ENCODE measurements at regions of chr16 and their contacts with region 1.

Region 1: GRCh38 chr16:50024684-50025536 is at the start of gene CNEP1R1:
- DNase-seq: peak; percentile 95
- ATAC-seq: peak; percentile 95
- H3K4me3 Mint-ChIP-seq: peak within 1 kb of the TSS; percentile 92
- H3K27ac Mint-ChIP-seq: peak within 1 kb of the TSS; percentile 46
- H3K4me1 Mint-ChIP-seq: peaks cover 16% of the 10 kb centered on the region
- H3K27me3 Mint-ChIP-seq: no peaks in the 10 kb centered on the region
- CTCF ChIP-seq: peak; percentile 92
- total RNA-seq, gene CNEP1R1: 13.2 to 13.8 TPM (median 13.7 TPM) in 3 replicates

Region 2: DNA sequence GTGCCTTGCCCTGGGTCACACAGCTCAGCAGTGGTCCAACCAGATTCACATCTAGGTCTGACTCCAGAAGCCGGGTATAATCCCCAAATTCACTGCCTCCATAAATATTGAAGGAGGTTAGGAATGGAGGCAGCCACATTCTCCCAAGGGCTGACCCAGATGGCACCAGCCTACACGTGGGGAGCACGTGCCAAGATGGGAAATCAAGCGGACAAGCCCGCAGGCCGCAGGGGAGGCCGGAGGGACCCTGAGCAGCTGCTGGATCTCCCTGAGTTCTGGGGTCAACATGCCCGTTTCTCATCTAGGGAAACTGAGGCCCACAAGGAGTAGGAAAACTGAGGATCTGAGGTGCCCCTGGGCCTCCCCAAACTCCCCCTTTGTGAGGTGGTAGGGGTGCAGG is 32.1 kb before region 1 on chr16:
- CTCF ChIA-PET with region 1: interaction called, 14 read pairs
- POLR2A ChIA-PET with region 1: no interaction called
- DNase-seq: no peak
- ATAC-seq: no peak
- H3K4me3 Mint-ChIP-seq: no peak overlapping the region
- H3K27ac Mint-ChIP-seq: no peak overlapping the region
- H3K4me1 Mint-ChIP-seq: no peaks in the 10 kb centered on the region
- H3K27me3 Mint-ChIP-seq: peaks cover 3% of the 10 kb centered on the region; the same call in 1 of the 2 replicates
- CTCF ChIP-seq: no peak

Region 3: GRCh38 chr16:50038756-50039529 is 14.0 kb after region 1 on chr16:
- CTCF ChIA-PET with region 1: interaction called, 41 read pairs
- POLR2A ChIA-PET with region 1: no interaction called
- DNase-seq: peak; percentile 17
- ATAC-seq: no peak
- H3K4me3 Mint-ChIP-seq: no peak overlapping the region
- H3K27ac Mint-ChIP-seq: peak overlapping the region; percentile 39; the same call in 1 of the 2 replicates
- H3K4me1 Mint-ChIP-seq: peaks cover 10% of the 10 kb centered on the region
- H3K27me3 Mint-ChIP-seq: no peaks in the 10 kb centered on the region
- CTCF ChIP-seq: no peak

Region 4: DNA sequence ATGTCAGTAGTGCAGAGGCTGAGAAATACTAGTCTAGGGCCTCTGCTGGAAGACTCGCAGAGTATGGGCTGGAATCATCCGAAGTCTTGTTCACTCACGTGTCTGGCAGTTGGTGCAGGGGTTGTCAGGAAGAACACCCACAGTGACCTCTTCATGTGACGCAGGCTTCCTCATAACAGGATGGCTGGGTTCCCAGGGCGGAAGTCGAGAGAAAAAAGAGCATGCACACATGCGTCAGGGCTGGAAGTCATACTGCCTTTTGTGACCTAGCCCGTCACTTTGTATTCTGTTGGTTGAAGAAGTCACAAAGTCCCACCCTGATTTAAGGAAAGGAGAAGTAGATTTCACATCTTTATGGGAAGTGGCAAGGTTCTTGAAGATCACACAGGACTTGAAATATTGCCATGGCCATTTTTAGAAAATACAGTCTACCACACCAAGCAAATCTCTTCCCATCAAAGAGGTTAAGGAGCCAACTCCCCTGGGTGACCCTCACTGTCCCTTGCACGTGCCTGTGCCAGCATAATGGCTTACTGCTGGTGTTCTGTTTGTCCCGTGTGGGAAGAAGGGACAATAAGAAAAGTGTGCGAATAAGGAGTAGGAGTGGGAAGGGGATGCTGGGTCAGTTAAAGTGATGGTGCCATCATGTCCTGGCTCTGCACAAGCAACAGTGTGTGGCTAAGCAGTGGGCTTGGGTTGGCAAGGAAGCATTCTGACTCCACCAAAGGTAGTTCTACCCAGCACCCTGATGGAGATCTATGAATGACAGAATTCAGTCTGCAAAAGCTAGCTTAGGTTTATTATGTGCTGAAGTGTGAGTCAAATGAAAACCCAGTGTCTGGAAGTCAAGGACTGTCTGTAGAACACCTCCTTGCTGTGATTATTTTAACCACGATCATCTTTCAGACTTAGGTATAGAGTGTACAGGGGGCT is 69.0 kb after region 1 on chr16:
- CTCF ChIA-PET with region 1: no interaction called
- POLR2A ChIA-PET with region 1: interaction called, 11 read pairs
- DNase-seq: no peak
- ATAC-seq: no peak
- H3K4me3 Mint-ChIP-seq: no peak overlapping the region
- H3K27ac Mint-ChIP-seq: no peak overlapping the region; the same call in none of the 2 replicates
- H3K4me1 Mint-ChIP-seq: no peaks in the 10 kb centered on the region
- H3K27me3 Mint-ChIP-seq: no peaks in the 10 kb centered on the region
- CTCF ChIP-seq: no peak

Measured in WTC11 (cell line).